Posterior cingulate gyrus (tissue), 11 donors: ENCODE measurements at regions of chr11 and their contacts with region 1.

Region 1: GRCh38 chr11:75820636-75821035 is 5.6 kb downstream of the UVRAG start:
- DNase-seq: no peak

Region 2: DNA sequence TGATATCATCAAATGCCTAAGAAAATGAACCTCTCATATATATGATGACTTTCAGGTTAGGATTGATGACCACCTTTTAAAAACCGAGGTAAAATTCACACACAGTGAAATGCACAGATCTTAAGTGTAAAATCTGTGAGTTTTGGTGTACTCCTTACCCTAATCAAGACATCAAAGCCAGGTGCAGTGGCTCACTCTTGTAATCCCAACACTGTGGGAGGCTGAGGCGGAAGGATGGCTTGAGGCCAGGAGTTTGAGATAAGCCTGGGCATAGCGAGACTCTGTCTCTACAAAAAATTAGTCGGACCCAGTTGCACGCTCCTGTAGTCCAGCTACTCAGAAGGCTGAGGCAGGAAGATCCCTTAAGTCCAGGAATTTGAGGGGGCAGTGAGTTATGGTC is 134.8 kb after region 1 on chr11:
- intact Hi-C with region 1: loop called (anchors 5 kb)
- DNase-seq: no peak

Region 3: GRCh38 chr11:76102802-76103201 is 282.2 kb after region 1 on chr11:
- intact Hi-C with region 1: no loop called
- DNase-seq: no peak